ENCODE measurements at regions of chr1 and their contacts with region 1.

Region 1: DNA sequence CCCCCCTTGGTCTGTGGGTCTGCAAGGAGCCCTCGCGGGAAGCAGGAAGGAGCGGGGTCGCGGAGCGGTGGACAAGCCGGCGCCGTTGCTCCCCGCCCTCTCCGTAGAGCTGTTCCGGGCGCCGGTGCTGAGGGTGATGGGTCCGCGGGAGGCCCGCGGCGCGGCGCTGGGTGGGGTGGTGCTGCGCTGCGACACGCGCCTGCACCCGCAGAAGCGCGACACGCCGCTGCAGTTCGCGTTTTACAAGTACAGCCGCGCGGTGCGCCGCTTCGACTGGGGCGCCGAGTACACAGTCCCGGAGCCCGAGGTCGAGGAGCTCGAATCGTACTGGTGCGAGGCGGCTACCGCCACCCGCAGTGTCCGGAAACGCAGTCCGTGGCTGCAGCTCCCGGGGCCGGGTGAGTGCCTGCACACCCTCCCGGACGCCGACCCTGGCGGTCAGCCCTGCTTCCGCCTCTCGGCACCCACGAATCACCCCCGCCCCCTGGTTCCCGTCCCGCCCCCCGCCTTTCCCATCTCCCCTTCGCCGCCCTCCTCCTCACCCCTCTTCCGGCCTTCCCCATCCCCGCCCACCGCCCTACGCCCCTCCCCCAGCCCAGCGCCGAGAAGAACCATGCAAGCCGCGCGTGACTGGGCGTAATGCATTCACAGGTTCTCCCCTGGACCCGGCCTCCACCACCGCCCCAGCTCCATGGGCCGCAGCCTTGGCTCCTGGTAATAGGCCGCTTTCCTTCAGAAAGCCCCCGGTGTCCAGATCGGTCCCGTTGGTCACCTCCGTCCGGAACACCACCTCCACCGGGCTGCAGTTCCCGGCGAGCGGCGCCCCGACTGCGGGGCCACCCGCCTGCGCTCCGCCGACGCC is 5.5 kb downstream of the FCRLB start:
- DNase-seq: no peak
- H3K4me3 ChIP-seq: peak overlapping the region; percentile 75
- CTCF ChIP-seq: no peak

Region 2: DNA sequence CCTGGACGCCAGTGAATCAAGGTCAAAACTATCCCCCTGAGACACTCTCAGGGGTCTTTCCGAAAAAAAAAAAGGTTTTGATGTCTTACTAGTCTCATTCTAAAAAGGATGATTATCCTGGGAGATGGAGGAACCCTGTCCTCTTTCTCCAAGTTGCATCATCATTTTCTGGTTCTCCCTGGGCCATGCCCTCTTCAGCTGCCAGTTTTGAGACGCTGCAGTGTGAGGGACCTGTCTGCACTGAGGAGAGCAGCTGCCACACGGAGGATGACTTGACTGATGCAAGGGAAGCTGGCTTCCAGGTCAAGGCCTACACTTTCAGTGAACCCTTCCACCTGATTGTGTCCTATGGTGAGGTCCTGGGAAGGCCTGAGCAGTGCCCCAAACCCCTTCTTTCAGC is 16.3 kb before region 1 on chr1:
- CTCF ChIA-PET with region 1: interaction called, 19 read pairs
- POLR2A ChIA-PET with region 1: interaction called, 4 read pairs
- DNase-seq: no peak
- H3K4me3 ChIP-seq: no peak overlapping the region
- CTCF ChIP-seq: no peak

Measured in AG04449 (cell line).